ENCODE measurements at regions of chr9 and their contacts with region 1.

Region 1: GRCh38 chr9:71604197-71605063 is 163.9 kb downstream of the CEMIP2 start:
- DNase-seq: peak; percentile 38
- CTCF ChIP-seq: peak; percentile 72

Region 2: GRCh38 chr9:71446473-71447411 is 157.7 kb before region 1 on chr9:
- CTCF ChIA-PET with region 1: no interaction called
- POLR2A ChIA-PET with region 1: no interaction called
- DNase-seq: peak; percentile 60
- CTCF ChIP-seq: no peak

Region 3: GRCh38 chr9:71614409-71615010 is 10.1 kb after region 1 on chr9:
- CTCF ChIA-PET with region 1: interaction called, 15 read pairs
- POLR2A ChIA-PET with region 1: no interaction called
- DNase-seq: no peak
- CTCF ChIP-seq: no peak

Region 4: DNA sequence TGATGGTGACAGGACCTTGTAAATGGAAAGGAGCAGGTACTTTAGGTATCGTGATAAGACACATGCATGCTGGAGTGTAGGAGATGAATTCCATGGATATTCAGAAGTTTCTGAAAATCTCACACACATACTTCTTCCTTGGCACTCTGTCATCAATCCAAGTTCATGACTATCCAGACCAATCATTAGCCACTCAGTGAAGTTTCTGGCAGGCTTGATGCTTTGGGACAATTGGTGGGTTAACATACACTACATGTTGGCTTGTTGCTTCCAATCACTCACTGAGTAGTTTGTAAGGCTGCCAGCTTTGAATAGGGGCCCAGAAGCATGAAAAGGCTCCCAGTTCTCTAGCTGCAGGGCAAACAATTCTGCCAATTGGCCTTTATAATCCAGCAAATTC is 16.3 kb after region 1 on chr9:
- CTCF ChIA-PET with region 1: interaction called, 15 read pairs
- POLR2A ChIA-PET with region 1: no interaction called
- DNase-seq: no peak
- CTCF ChIP-seq: no peak

Region 5: GRCh38 chr9:71716138-71716909 is 111.9 kb after region 1 on chr9:
- CTCF ChIA-PET with region 1: no interaction called
- POLR2A ChIA-PET with region 1: no interaction called
- DNase-seq: no peak
- CTCF ChIP-seq: no peak

Region 6: DNA sequence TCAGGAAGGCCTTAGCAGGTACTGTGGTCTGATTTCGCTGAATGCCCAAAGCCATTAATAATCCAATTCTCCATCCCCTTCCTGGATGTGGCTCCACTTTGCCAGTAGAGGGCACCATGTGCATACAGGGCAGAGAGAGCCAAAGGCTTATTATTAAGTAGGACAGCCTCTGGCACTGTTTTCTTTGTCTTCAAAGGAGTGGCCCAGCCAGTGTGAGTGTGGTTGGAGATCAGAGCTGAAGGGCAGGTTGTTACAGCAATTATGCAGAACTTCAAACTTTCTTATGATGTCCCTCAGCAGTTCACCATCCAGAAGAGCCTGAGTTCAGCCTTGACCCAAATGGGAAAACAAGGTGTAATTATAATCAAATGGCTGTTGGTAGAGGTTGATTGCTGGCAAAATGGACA is 202.5 kb after region 1 on chr9:
- CTCF ChIA-PET with region 1: interaction called, 12 read pairs
- POLR2A ChIA-PET with region 1: no interaction called
- DNase-seq: peak; percentile 62
- CTCF ChIP-seq: peak; percentile 84